ENCODE measurements at regions of chrX and their contacts with region 1.

Region 1: DNA sequence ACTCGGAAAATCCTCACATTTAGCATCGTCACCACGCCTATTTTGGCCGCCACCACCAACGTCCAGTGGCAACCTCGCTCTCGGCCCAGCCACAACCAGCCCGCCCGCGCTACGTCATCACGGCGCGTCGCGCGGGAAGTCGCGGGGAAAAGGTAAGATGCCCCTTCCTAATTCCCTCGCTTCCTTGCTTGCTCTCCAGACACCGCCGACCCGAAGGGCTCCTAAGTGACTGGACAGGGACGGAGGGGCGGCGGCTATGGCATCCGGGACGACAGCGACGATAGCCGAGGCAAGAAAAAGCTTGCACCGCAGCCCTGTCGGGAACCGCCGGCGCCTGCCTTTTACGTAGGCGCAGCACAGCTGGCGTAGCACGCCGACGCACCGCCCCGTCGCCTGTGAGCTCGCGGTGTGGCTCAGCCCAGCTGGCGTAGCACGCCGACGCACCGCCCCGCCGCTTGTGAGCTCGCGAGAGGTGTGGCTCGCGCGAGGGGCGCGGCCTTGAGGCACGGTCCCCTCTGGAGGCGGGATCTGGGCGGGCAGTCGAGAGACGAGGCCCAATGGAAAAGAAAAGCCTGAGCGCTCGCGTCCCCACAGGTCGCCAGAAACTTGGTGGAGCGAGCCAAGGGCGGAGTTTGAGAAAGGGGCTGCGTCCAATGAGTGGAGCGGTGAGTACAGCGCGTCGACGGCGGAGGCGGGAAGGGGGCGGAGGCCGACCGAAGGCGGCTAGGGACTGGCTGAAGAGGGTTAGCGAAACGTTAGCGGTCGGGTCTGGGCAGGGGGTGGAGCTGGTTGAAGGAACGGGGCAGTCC is at the start of gene HDAC6:
- DNase-seq: peak; percentile 86 to 98 (median 96)
- H3K4me3 ChIP-seq: peak within 1 kb of the TSS; percentile 25 to 80 (median 68)
- H3K27ac ChIP-seq: peak within 1 kb of the TSS; percentile 40 to 98 (median 92)
- H3K27me3 ChIP-seq: peaks cover 0 to 35% (median 3%) of the 10 kb centered on the region in 45 donors
- CTCF ChIP-seq: peak in 13 of 56 donors; percentile 6 to 31 (median 17)
- total RNA-seq, gene HDAC6: 80.0 to 189 (median 120) TPM

Region 2: GRCh38 chrX:48648336-48648751 is 153.1 kb before region 1 on chrX:
- intact Hi-C with region 1: loop called in 1 of 2 experiments (anchors 10 kb)
- DNase-seq: peak in 3 of 10 donors; percentile 6 to 64 (median 57)
- H3K4me3 ChIP-seq: no peak overlapping the region
- H3K27ac ChIP-seq: peak overlapping the region in 28 of 59 donors; percentile 5 to 71 (median 44)
- H3K27me3 ChIP-seq: peaks cover 0 to 60% (median 3%) of the 10 kb centered on the region in 45 donors
- CTCF ChIP-seq: peak in 52 of 56 donors; percentile 16 to 66 (median 44)

Region 3: GRCh38 chrX:48696301-48697181 is 104.9 kb before region 1 on chrX and contains the start of gene SUV39H1:
- intact Hi-C with region 1: loop called in 1 of 2 experiments (anchors 10 kb)
- DNase-seq: peak; percentile 68 to 91 (median 86)
- H3K4me3 ChIP-seq: peak within 1 kb of the TSS; percentile 41 to 75 (median 61)
- H3K27ac ChIP-seq: peak within 1 kb of the TSS; percentile 51 to 96 (median 89)
- H3K27me3 ChIP-seq: peaks cover 0 to 45% (median 7%) of the 10 kb centered on the region in 45 donors
- CTCF ChIP-seq: peak in 6 of 56 donors; percentile 5 to 20 (median 9)
- total RNA-seq, gene SUV39H1: 2.4 to 11.8 (median 6.3) TPM

Region 4: GRCh38 chrX:48737213-48737938 is 64.1 kb before region 1 on chrX:
- intact Hi-C with region 1: loop called (anchors 2 to 5 kb)
- DNase-seq: peak; percentile 75 to 93 (median 90)
- H3K4me3 ChIP-seq: peak overlapping the region; percentile 30 to 81 (median 65)
- H3K27ac ChIP-seq: peak overlapping the region in 58 of 59 donors; percentile 62 to 95 (median 88)
- H3K27me3 ChIP-seq: peaks cover 0 to 31% (median 3%) of the 10 kb centered on the region in 45 donors
- CTCF ChIP-seq: peak in 5 of 56 donors; percentile 1 to 12 (median 6)

Region 5: DNA sequence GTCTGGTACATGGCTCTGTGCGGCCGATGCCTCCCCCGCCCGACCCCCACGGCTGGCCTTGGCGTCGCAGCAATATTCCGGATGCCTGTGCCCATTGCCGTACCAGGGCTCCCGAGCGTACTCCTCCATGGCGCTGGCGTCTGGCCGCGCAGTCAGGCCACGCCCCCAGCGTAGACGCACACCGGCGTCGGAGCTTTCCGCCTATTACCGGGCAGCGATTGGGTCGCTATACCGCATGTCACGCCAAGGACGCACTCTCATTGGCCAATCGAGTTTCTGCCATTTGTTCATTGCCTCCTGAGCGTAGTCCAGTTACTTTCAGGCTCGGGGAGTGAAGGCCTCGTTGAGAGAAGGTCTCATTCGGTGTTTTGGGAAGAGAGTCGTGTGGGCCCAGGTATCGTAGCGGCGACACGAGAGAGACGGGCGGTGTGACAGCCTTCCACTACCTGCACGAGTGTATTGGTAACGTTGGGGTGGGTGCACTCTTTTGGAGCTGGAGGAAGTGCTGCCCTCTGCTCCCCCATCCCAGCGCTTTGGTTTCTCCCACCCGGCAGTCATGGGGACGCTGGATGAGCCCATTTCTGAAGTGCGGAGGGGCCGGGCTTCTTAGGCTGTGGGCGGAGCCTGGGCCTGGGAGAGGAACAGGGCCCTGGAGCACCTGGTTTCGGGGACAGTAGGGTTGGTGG is 96.3 kb after region 1 on chrX and contains the starts of genes PQBP1 and TIMM17B:
- intact Hi-C with region 1: loop called (anchors 2 to 5 kb)
- DNase-seq: peak; percentile 79 to 95 (median 92)
- H3K4me3 ChIP-seq: peak within 1 kb of the TSS; percentile 46 to 83 (median 72)
- H3K27ac ChIP-seq: peak within 1 kb of the TSS in 58 of 59 donors; percentile 36 to 97 (median 88)
- H3K27me3 ChIP-seq: peaks cover 0 to 50% (median 5%) of the 10 kb centered on the region in 45 donors
- CTCF ChIP-seq: peak in 2 of 56 donors; percentile 12 to 13
- total RNA-seq, gene PQBP1: 42.9 to 91.7 (median 67.1) TPM
- total RNA-seq, gene TIMM17B: 22.3 to 50.4 (median 35.3) TPM

Region 6: GRCh38 chrX:49043220-49043986 is 241.9 kb after region 1 on chrX and contains the start of gene TFE3:
- intact Hi-C with region 1: loop called in 1 of 2 experiments (anchors 10 kb)
- DNase-seq: peak; percentile 87 to 98 (median 97)
- H3K4me3 ChIP-seq: peak within 1 kb of the TSS; percentile 45 to 88 (median 75)
- H3K27ac ChIP-seq: peak within 1 kb of the TSS in 58 of 59 donors; percentile 61 to 98 (median 93)
- H3K27me3 ChIP-seq: peaks cover 0 to 20% (median 0%) of the 10 kb centered on the region in 45 donors
- CTCF ChIP-seq: peak; percentile 33 to 80 (median 66)
- total RNA-seq, gene TFE3: 45.0 to 84.2 (median 59.0) TPM